ENCODE measurements at regions of chr7 and their contacts with region 1.

Region 1: DNA sequence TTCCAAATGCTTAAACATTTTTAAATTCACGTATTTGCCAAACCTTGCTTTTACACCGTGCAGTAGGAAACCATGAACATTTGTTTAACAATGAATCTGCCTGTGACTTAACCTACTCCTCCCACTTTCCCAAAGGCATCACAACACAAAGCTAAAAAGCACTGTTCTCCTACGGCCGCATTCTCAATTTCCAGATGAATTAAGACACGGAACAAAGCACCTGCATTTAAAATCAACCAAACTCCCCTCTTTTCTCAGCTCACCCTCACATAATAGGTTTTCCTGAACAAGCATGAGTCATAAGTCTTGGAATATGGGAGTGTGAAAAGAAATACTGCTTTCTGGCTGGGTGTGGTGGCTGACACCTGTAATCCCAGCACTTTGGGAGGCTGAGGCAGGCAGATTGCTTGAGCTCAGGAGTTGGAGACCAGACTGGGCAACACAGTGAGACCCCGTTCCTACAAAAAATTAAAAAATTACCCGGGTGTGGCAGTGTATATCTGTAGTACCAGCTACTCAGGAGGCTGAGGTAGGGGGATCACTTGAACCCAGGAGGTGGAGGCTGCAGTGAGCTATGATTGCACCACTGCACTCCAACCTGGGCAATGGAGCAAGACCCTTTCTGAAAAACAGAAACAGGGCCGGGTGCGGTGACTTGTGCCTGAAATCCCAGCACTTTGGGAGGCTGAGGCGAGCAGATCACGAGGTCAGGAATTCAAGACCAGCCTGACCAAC is 51.7 kb upstream of the CYTH3 start:
- DNase-seq: no peak
- ATAC-seq: no peak
- H3K4me3 ChIP-seq: no peak overlapping the region
- H3K27ac ChIP-seq: no peak overlapping the region
- H3K4me1 ChIP-seq: peaks cover 0 to 2% (median 0%) of the 10 kb centered on the region in 12 donors
- H3K27me3 ChIP-seq: no peaks in the 10 kb centered on the region
- CTCF ChIP-seq: no peak
- POLR2A ChIP-seq: no peak

Region 2: DNA sequence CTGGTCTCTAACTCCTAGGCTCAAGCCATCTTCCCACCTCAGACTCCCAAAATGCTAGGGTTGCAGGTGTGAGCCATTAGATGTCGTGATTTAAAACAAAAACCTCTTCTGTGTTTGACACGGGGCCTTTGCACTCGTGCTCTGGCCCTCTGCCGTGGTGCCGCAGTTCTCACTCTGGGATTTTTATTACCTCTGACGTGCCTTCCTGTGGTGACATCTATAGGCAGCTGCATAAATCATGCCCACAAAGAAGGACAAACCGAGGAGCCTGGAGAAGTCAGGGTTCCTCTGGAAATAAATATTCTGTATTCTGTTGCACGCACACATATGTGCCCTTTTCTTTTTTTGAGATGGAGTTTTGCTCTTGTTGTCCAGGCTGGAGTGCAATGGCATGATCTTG is 469.4 kb before region 1 on chr7:
- intact Hi-C with region 1: loop called in 1 of 10 experiments (anchors 5 kb)
- DNase-seq: no peak
- ATAC-seq: no peak
- H3K4me3 ChIP-seq: no peak overlapping the region
- H3K27ac ChIP-seq: no peak overlapping the region
- H3K4me1 ChIP-seq: no peaks in the 10 kb centered on the region
- H3K27me3 ChIP-seq: no peaks in the 10 kb centered on the region
- CTCF ChIP-seq: no peak
- POLR2A ChIP-seq: no peak

Region 3: DNA sequence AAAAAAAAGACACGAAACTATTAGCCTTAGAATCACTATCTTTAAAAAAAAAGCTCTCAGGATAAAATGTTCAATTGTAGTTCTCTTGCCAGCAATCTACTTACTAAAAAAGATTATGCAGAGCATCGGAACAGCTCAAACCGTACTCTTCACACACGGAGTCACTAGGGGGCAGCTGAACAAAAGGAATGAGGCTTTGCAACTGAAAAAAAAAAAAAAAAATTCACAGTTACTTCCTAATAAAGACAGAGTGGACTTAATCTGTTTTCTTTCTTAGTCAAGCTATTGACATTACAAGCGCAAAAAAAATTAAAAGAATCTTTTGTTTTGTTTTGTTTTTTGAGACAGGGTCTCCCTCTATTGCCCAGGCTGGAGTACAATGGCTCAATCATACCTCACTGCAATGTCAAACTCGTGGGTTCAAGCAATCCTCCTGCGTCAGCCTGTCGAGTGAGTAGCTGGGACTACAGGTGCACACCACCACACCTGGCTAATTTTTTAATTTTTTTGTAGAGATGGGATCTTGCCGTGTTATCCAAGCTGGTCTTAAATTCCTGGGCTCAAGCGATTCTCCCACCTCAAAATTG is 326.8 kb before region 1 on chr7:
- intact Hi-C with region 1: loop called in 5 of 10 experiments (anchors 5 to 10 kb)
- DNase-seq: peak in 4 of 5 donors; percentile 24 to 45 (median 35)
- ATAC-seq: peak in 3 of 4 donors; percentile 70 to 76 (median 71)
- H3K4me3 ChIP-seq: no peak overlapping the region
- H3K27ac ChIP-seq: no peak overlapping the region
- H3K4me1 ChIP-seq: peaks cover 0 to 3% (median 0%) of the 10 kb centered on the region in 12 donors
- H3K27me3 ChIP-seq: no peaks in the 10 kb centered on the region
- CTCF ChIP-seq: peak; percentile 31 to 79 (median 66)
- POLR2A ChIP-seq: no peak

Region 4: DNA sequence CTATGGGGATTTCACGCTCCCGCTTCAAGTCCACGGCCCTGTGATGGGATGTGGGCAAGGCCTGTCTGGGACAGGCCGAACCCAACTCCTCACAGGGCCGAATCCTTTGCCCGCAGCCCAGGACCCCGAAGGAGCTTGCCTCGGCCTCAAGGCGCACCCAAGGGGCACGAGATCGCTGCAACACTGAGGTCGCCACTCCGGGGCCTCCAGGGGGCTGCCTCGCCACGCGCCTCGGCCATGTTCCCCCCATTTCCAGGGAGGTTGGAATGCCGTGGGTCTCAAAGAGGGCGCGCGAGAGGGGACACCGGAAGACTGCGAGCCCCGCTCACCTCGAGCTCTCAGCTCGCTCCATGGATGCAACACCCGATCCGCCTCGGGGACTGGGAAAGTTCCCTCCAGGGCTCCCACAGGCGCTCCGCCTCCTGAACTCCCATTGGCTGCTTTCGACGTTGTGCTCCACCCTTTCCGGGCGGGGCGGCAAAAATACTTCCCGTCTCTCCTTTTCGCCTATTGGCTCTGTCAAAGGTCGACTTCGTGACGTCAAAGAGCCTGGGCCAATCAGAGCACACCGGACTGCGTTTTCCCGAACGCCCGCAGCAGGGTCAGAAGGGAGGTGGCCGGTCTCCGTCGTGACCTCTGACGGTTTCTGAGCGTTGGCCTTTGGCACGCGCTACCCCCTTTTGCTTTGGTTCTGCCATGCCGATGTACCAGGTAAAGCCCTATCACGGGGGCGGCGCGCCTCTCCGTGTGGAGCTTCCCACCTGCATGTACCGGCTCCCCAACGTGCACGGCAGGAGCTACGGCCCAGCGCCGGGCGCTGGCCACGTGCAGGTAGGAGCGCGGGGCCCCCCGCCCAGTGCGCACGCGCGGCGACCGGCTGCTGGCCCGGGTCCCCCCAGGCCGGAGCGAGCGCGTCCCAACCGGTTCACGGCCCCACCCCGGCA is 315.2 kb before region 1 on chr7 and contains the starts of genes AIMP2 and PMS2:
- intact Hi-C with region 1: loop called in 2 of 10 experiments (anchors 10 kb)
- DNase-seq: peak; percentile 98 to 100 (median 99)
- ATAC-seq: peak; percentile 97 to 99 (median 98)
- H3K4me3 ChIP-seq: peak within 1 kb of the TSS; percentile 59 to 87 (median 79)
- H3K27ac ChIP-seq: peak within 1 kb of the TSS; percentile 80 to 99 (median 91)
- H3K4me1 ChIP-seq: peaks cover 0 to 45% (median 24%) of the 10 kb centered on the region in 12 donors
- H3K27me3 ChIP-seq: no peaks in the 10 kb centered on the region
- CTCF ChIP-seq: peak in 2 of 12 donors; percentile 6 to 25
- POLR2A ChIP-seq: peak in 1 of 2 donors; percentile 80
- total RNA-seq, gene AIMP2: 40.5 to 105 (median 51.1) TPM
- total RNA-seq, gene PMS2: 4.4 to 10.5 (median 7.0) TPM

Region 5: DNA sequence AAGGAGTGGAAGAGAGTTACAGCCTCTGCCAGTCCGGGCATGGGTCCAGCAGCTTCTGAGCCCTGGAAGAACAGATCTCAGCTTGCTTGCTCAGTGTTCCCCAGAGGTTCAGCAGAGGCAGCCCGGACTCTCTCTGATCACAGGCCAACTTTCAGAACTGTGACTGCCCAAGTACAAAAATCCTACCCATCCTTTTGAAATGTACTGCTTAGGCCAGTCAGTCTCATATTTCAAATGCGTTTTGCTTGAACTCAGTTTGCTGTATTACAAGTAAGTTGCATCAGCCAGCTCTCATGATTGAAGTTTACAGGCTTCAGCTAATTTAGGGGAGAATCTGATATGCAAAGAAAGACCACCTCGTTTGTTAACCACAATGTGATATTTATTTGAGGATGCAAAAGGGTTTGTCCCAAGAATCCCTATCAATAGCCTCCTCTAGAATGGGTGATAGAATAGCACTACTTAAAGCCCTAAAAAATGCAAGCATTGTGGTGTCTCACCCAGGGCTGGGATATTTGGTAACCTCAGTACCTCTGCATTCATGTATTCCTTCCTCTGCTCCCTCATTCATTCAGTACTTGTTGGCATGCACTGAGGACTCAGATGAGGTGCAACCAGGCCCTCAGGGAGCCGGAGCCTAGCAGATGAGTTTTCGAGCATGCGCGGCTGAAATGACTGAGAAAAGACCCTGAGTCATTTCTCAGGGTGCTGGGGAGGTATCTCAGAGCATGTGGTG is 308.0 kb before region 1 on chr7:
- intact Hi-C with region 1: loop called in 1 of 10 experiments (anchors 10 kb)
- DNase-seq: peak; percentile 46 to 81 (median 77)
- ATAC-seq: peak; percentile 62 to 90 (median 82)
- H3K4me3 ChIP-seq: no peak overlapping the region
- H3K27ac ChIP-seq: peak overlapping the region in 8 of 12 donors; percentile 0 to 67 (median 46)
- H3K4me1 ChIP-seq: peaks cover 0 to 30% (median 6%) of the 10 kb centered on the region in 12 donors
- H3K27me3 ChIP-seq: no peaks in the 10 kb centered on the region
- CTCF ChIP-seq: no peak
- POLR2A ChIP-seq: no peak

Region 6: DNA sequence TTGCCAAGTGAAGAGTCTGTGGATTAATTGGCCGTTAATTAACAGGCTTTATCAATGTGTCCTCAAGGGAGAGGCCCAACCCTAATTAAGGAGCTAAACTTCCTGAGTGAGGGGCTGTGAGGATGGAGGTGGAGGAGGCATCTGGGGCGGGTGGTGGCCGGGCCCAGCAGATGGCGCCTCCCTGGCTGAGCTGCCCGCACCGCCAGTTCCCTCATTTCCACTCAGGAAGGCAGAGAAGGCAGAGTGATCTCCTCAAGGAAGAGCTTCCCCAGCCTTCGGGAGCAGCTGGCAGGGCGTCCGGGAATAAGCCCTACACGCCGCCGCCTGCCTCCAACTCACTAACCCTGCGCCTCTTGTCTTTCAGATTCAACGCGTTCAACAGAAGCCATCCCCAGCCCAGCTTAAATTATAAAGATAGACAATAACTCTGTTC is 163.9 kb before region 1 on chr7:
- intact Hi-C with region 1: loop called (anchors 1 to 5 kb)
- DNase-seq: peak in 4 of 5 donors; percentile 69 to 78 (median 73)
- ATAC-seq: peak; percentile 14 to 73 (median 61)
- H3K4me3 ChIP-seq: no peak overlapping the region
- H3K27ac ChIP-seq: peak overlapping the region in 11 of 12 donors; percentile 2 to 58 (median 47)
- H3K4me1 ChIP-seq: peaks cover 3 to 59% (median 34%) of the 10 kb centered on the region in 12 donors
- H3K27me3 ChIP-seq: no peaks in the 10 kb centered on the region
- CTCF ChIP-seq: peak; percentile 52 to 84 (median 74)
- POLR2A ChIP-seq: no peak

Region 7: DNA sequence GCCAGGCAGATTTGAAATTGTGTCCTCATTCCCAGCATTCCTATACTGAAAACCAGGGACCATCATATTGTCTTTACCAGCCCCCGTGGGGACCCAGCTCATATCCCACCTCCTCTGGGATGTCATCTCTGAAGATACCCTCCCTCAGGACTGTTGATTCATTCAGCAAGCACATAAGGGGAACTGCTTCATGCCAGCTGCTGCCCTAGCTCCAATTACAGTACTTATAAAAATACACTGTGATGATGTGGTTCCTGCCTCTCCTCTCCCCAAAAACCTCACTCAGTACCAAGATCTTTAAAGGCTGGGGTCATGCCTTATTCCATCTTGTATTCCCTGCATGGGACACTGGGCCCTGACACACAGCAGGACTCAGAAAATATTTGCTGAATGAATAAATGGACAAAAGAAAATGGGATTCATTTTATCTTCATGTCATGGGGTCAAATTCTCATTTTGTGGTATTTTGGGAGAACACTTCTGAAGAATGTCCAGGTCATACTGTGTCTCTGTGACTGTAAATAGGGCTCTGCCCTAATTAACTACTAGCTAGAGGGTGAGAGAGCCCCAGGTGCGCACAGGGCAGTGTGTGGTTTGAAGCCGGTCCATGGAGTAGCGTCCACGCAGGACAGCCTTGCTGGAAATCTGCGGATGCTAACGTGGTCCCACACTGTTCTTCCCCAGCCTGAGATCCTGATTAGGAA is 152.6 kb after region 1 on chr7:
- intact Hi-C with region 1: no loop called
- DNase-seq: no peak
- ATAC-seq: peak in 2 of 4 donors; percentile 7 to 17
- H3K4me3 ChIP-seq: no peak overlapping the region
- H3K27ac ChIP-seq: no peak overlapping the region
- H3K4me1 ChIP-seq: peaks cover 7 to 65% (median 37%) of the 10 kb centered on the region in 12 donors
- H3K27me3 ChIP-seq: no peaks in the 10 kb centered on the region
- CTCF ChIP-seq: no peak
- POLR2A ChIP-seq: no peak